ENCODE measurements at regions of chr5 and their contacts with region 1.

Region 1: DNA sequence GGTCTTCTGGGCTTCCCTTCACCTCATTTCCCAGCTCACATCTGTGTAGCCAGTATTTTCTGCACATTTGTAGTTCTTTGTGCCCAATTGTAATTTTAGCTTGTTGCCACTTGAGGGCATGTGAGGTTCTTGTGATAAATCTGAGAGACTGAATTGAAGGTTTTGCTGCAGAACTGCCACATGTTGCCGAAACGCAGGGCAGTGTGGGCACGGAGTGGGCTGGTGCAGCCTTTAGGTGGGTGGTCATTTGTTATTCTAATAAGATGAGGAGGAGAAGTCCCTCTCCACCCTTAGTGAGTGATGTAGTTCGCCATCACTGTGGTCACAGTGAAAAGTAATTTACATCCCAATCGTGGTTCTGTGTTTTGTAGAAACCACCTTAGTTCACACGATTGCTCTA is 21.2 kb downstream of the OTULIN start:
- DNase-seq: peak in 2 of 5 donors; percentile 35 to 59
- H3K4me3 ChIP-seq: no peak overlapping the region
- H3K4me3 Mint-ChIP-seq: peak overlapping the region in 6 of 7 donors; percentile 43 to 71 (median 61)
- H3K27ac ChIP-seq: no peak overlapping the region
- H3K27ac Mint-ChIP-seq: peak overlapping the region; percentile 26 to 89 (median 58)
- H3K4me1 ChIP-seq: peaks cover 8% of the 10 kb centered on the region
- H3K4me1 Mint-ChIP-seq: peaks cover 13 to 33% (median 19%) of the 10 kb centered on the region in 3 donors
- H3K27me3 ChIP-seq: no peaks in the 10 kb centered on the region
- H3K27me3 Mint-ChIP-seq: no peaks in the 10 kb centered on the region

Region 2: GRCh38 chr5:14298126-14298847 is 387.5 kb before region 1 on chr5:
- CTCF ChIA-PET with region 1: no interaction called
- POLR2A ChIA-PET with region 1: no interaction called
- DNase-seq: no peak
- H3K4me3 ChIP-seq: no peak overlapping the region
- H3K4me3 Mint-ChIP-seq: no peak overlapping the region
- H3K27ac ChIP-seq: no peak overlapping the region
- H3K27ac Mint-ChIP-seq: no peak overlapping the region
- H3K4me1 ChIP-seq: no peaks in the 10 kb centered on the region
- H3K4me1 Mint-ChIP-seq: no peaks in the 10 kb centered on the region
- H3K27me3 ChIP-seq: no peaks in the 10 kb centered on the region
- H3K27me3 Mint-ChIP-seq: peaks cover 6 to 7% of the 10 kb centered on the region in 2 donors

Region 3: DNA sequence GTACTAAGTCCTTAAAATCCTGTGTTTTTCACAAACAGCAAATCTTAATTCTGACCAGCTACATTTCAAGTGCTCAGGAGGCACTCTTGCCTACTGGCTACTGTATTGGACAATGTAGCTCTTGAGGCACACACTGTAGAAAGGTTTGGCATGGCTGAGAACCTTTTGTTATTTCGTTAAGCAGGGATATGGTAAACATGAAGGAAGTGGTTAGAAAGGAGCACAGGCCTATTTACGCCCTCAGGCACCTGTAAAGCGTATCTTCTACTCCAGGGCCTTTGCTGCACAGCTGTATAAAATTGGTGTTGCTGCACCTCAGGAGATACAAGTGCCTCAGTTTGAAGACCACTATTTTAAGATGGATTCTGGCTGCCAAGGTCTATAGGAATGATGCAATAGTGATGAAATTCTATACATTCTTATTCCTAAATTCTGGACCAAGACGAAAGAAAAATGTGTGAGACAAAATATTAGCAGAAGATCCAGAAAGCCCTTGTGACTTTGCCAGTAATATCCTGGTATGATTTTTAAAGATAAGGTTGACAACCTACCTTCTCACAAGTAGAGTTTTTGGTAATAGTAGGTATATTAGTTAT is 30.5 kb before region 1 on chr5:
- CTCF ChIA-PET with region 1: no interaction called
- POLR2A ChIA-PET with region 1: no interaction called
- DNase-seq: no peak
- H3K4me3 ChIP-seq: no peak overlapping the region
- H3K4me3 Mint-ChIP-seq: no peak overlapping the region
- H3K27ac ChIP-seq: no peak overlapping the region
- H3K27ac Mint-ChIP-seq: peak overlapping the region in 2 of 8 donors; percentile 58 to 86
- H3K4me1 ChIP-seq: no peaks in the 10 kb centered on the region
- H3K4me1 Mint-ChIP-seq: peaks cover 4 to 25% (median 19%) of the 10 kb centered on the region in 3 donors
- H3K27me3 ChIP-seq: no peaks in the 10 kb centered on the region
- H3K27me3 Mint-ChIP-seq: no peaks in the 10 kb centered on the region

Region 4: GRCh38 chr5:14706615-14707021 is 20.9 kb after region 1 on chr5:
- CTCF ChIA-PET with region 1: interaction called, 33 read pairs
- POLR2A ChIA-PET with region 1: interaction called, 3 read pairs
- DNase-seq: peak in 3 of 5 donors; percentile 10 to 83 (median 65)
- H3K4me3 ChIP-seq: peak overlapping the region; percentile 10
- H3K4me3 Mint-ChIP-seq: peak overlapping the region in 6 of 7 donors; percentile 65 to 84 (median 79)
- H3K27ac ChIP-seq: peak overlapping the region; percentile 36
- H3K27ac Mint-ChIP-seq: peak overlapping the region; percentile 92 to 100 (median 98)
- H3K4me1 ChIP-seq: peaks cover 80% of the 10 kb centered on the region
- H3K4me1 Mint-ChIP-seq: peaks cover 75 to 88% (median 84%) of the 10 kb centered on the region in 3 donors
- H3K27me3 ChIP-seq: no peaks in the 10 kb centered on the region
- H3K27me3 Mint-ChIP-seq: no peaks in the 10 kb centered on the region

Region 5: GRCh38 chr5:14871210-14872069 is 185.7 kb after region 1 on chr5 and contains the start of gene ANKH:
- CTCF ChIA-PET with region 1: interaction called, 10 read pairs
- POLR2A ChIA-PET with region 1: no interaction called
- DNase-seq: peak; percentile 75 to 86 (median 84)
- H3K4me3 ChIP-seq: peak within 1 kb of the TSS; percentile 64
- H3K4me3 Mint-ChIP-seq: peak within 1 kb of the TSS; percentile 93 to 98 (median 96)
- H3K27ac ChIP-seq: peak within 1 kb of the TSS; percentile 65
- H3K27ac Mint-ChIP-seq: peak within 1 kb of the TSS; percentile 92 to 99 (median 96)
- H3K4me1 ChIP-seq: peaks cover 10% of the 10 kb centered on the region
- H3K4me1 Mint-ChIP-seq: peaks cover 28 to 54% (median 43%) of the 10 kb centered on the region in 3 donors
- H3K27me3 ChIP-seq: no peaks in the 10 kb centered on the region
- H3K27me3 Mint-ChIP-seq: no peaks in the 10 kb centered on the region
- total RNA-seq, gene ANKH: 80.0 to 80.5 TPM

Region 6: GRCh38 chr5:15003511-15003920 is 317.8 kb after region 1 on chr5:
- CTCF ChIA-PET with region 1: interaction called, 35 read pairs
- POLR2A ChIA-PET with region 1: no interaction called
- DNase-seq: peak; percentile 36 to 67 (median 57)
- H3K4me3 ChIP-seq: no peak overlapping the region
- H3K4me3 Mint-ChIP-seq: no peak overlapping the region
- H3K27ac ChIP-seq: no peak overlapping the region
- H3K27ac Mint-ChIP-seq: peak overlapping the region in 1 of 8 donors; percentile 22
- H3K4me1 ChIP-seq: no peaks in the 10 kb centered on the region
- H3K4me1 Mint-ChIP-seq: no peaks in the 10 kb centered on the region
- H3K27me3 ChIP-seq: no peaks in the 10 kb centered on the region
- H3K27me3 Mint-ChIP-seq: peaks cover 8 to 37% of the 10 kb centered on the region in 2 donors